Calu3 (cell line): ENCODE measurements at regions of chr18 and their contacts with region 1.

Region 1: GRCh38 chr18:9913526-9914333 is at the start of gene VAPA:
- DNase-seq: peak; percentile 96
- H3K4me3 Mint-ChIP-seq: peak within 1 kb of the TSS; percentile 86
- H3K27ac Mint-ChIP-seq: peak within 1 kb of the TSS; percentile 93
- H3K4me1 Mint-ChIP-seq: peaks cover 15% of the 10 kb centered on the region
- H3K27me3 Mint-ChIP-seq: peaks cover 13% of the 10 kb centered on the region
- CTCF ChIP-seq: no peak
- total RNA-seq, gene VAPA: 196 and 227 TPM in 2 replicates

Region 2: GRCh38 chr18:9102508-9103375 is 811.0 kb before region 1 on chr18 and contains the start of gene NDUFV2:
- CTCF ChIA-PET with region 1: no interaction called
- intact Hi-C with region 1: no loop called
- DNase-seq: peak; percentile 99
- H3K4me3 Mint-ChIP-seq: peak within 1 kb of the TSS; percentile 79
- H3K27ac Mint-ChIP-seq: peak within 1 kb of the TSS; percentile 90
- H3K4me1 Mint-ChIP-seq: peaks cover 34% of the 10 kb centered on the region
- H3K27me3 Mint-ChIP-seq: no peaks in the 10 kb centered on the region
- CTCF ChIP-seq: no peak
- total RNA-seq, gene NDUFV2: 199 TPM in 2 replicates

Region 3: GRCh38 chr18:9643549-9643948 is 270.2 kb before region 1 on chr18:
- CTCF ChIA-PET with region 1: no interaction called
- intact Hi-C with region 1: no loop called
- DNase-seq: peak; percentile 74
- H3K4me3 Mint-ChIP-seq: no peak overlapping the region
- H3K27ac Mint-ChIP-seq: peak overlapping the region; percentile 90
- H3K4me1 Mint-ChIP-seq: peaks cover 14% of the 10 kb centered on the region
- H3K27me3 Mint-ChIP-seq: no peaks in the 10 kb centered on the region
- CTCF ChIP-seq: no peak

Region 4: GRCh38 chr18:9876867-9877654 is 36.7 kb before region 1 on chr18:
- CTCF ChIA-PET with region 1: interaction called, 3 read pairs
- intact Hi-C with region 1: loop called (anchors 2 kb)
- DNase-seq: peak; percentile 54
- H3K4me3 Mint-ChIP-seq: peak overlapping the region; percentile 67
- H3K27ac Mint-ChIP-seq: peak overlapping the region; percentile 97
- H3K4me1 Mint-ChIP-seq: peaks cover 25% of the 10 kb centered on the region
- H3K27me3 Mint-ChIP-seq: no peaks in the 10 kb centered on the region
- CTCF ChIP-seq: no peak

Region 5: GRCh38 chr18:9898792-9899549 is 14.8 kb before region 1 on chr18:
- CTCF ChIA-PET with region 1: interaction called, 12 read pairs
- intact Hi-C with region 1: no loop called
- DNase-seq: peak; percentile 45
- H3K4me3 Mint-ChIP-seq: peak overlapping the region; percentile 18
- H3K27ac Mint-ChIP-seq: peak overlapping the region; percentile 64
- H3K4me1 Mint-ChIP-seq: peaks cover 34% of the 10 kb centered on the region
- H3K27me3 Mint-ChIP-seq: no peaks in the 10 kb centered on the region
- CTCF ChIP-seq: no peak